PC-9 (cell line): ENCODE measurements at regions of chr1 and their contacts with region 1.

Region 1: GRCh38 chr1:1164701-1165451 is 8.8 kb upstream of the TTLL10 start:
- DNase-seq: peak; percentile 76 to 78
- H3K4me3 ChIP-seq: peak overlapping the region; percentile 99
- H3K27ac ChIP-seq: peak overlapping the region; percentile 84
- H3K4me1 ChIP-seq: peaks cover 18% of the 10 kb centered on the region
- H3K27me3 ChIP-seq: no peaks in the 10 kb centered on the region
- CTCF ChIP-seq: no peak

Region 2: DNA sequence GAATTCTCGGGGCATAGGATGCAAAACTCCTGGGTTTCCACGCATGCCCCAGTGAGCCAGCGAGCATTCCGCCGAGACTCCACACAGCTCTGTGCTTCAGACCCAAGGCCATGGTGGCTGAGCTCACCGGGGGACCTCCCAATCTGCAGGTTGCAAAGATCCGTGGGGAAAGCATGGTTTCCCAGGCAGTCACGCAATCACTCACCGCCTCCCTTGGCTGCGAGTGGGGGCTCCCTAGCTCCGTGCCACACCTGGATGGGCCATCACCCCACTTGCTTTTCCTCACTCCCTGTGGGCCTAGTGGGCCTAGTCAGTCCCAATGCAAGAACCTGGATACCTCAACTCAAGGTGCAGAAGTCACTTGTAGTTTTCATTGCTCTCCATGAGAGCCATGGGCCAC is 278.1 kb before region 1 on chr1:
- CTCF ChIA-PET with region 1: no interaction called
- POLR2A ChIA-PET with region 1: interaction called, 12 read pairs
- intact Hi-C with region 1: no loop called
- DNase-seq: no peak
- H3K4me3 ChIP-seq: no peak overlapping the region
- H3K27ac ChIP-seq: no peak overlapping the region
- H3K4me1 ChIP-seq: no peaks in the 10 kb centered on the region
- H3K27me3 ChIP-seq: peaks cover 49% of the 10 kb centered on the region
- CTCF ChIP-seq: no peak

Region 3: DNA sequence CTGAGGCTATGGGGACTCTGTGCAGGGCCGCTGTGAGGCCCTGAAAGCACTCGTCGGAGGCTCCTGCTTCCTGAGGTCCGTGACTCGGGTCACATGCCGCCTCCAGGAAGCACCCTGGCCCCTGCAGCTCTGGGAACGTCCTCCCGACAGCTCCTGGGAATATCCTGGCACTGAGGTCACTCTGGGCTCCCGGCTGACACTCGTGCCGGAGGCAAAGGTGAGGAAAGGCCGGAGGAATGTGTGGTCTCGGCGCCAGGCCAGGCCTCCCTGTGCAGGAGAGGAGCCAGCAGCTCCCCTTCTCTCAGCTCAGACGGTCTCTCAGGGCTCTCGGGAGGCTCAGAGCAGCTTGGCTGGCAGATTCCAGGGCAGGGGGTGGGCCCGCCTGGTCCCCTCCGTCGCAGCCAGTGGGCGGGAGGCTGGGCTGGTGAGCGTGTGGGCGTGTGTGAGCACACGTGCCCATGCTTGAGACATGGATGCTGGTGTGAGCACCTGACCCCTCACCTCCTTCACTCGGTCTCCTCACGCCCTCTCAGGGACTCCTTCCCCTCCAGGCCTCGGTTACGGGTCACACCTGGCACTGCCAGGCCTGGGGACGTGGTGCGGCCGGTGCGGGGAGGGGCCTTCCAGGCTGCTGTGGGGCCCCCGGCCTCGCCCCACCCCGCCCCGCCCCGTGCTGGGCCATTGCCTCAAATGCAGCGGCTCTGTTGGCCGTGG is 85.3 kb before region 1 on chr1:
- CTCF ChIA-PET with region 1: no interaction called
- POLR2A ChIA-PET with region 1: no interaction called
- intact Hi-C with region 1: no loop called
- DNase-seq: peak; percentile 96
- H3K4me3 ChIP-seq: peak overlapping the region; percentile 55
- H3K27ac ChIP-seq: peak overlapping the region; percentile 93
- H3K4me1 ChIP-seq: peaks cover 20% of the 10 kb centered on the region
- H3K27me3 ChIP-seq: no peaks in the 10 kb centered on the region
- CTCF ChIP-seq: no peak

Region 4: DNA sequence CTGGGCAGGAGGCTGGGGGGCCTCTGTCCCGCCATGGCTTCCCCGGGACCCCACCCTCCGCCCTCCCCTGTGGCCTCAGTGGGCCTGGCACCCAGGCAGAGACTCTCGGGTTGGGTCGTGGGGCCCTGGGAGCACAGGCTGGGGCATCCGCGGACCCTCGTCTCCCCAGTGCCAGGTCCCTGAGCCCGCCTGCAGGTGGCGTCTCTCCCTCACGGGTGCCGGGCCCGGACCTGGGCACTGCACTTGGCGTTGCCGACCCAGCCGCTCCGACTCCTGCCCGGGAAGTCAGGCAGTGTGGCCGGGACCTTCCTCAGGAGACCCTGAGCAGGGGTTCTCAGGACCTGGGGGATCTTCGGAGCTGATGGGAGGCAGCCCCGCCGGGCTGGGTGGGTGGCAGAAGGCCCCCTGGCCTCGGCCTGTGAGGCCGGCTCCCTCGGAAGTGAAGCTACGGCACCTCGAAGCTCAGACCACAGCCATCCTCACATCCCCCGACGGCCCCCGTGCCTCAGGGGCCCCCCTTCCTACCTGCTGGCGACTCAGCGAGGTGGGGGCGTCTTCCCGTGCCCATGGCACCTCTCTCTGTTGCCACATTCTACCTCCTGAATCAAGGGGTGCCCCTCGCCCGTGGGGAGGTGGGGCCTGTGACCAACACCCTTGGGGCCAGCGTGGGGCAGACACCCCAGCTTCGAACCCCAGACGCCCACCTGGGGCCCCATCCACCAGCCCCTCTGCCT is 42.6 kb before region 1 on chr1:
- CTCF ChIA-PET with region 1: no interaction called
- POLR2A ChIA-PET with region 1: interaction called, 4 read pairs
- intact Hi-C with region 1: loop called (anchors 2 kb)
- DNase-seq: peak in 1 of 2 experiments; percentile 82
- H3K4me3 ChIP-seq: peak overlapping the region; percentile 29; the same call in 1 of the 2 replicates
- H3K27ac ChIP-seq: no peak overlapping the region
- H3K4me1 ChIP-seq: peaks cover 22% of the 10 kb centered on the region
- H3K27me3 ChIP-seq: no peaks in the 10 kb centered on the region
- CTCF ChIP-seq: peak; percentile 86

Region 5: DNA sequence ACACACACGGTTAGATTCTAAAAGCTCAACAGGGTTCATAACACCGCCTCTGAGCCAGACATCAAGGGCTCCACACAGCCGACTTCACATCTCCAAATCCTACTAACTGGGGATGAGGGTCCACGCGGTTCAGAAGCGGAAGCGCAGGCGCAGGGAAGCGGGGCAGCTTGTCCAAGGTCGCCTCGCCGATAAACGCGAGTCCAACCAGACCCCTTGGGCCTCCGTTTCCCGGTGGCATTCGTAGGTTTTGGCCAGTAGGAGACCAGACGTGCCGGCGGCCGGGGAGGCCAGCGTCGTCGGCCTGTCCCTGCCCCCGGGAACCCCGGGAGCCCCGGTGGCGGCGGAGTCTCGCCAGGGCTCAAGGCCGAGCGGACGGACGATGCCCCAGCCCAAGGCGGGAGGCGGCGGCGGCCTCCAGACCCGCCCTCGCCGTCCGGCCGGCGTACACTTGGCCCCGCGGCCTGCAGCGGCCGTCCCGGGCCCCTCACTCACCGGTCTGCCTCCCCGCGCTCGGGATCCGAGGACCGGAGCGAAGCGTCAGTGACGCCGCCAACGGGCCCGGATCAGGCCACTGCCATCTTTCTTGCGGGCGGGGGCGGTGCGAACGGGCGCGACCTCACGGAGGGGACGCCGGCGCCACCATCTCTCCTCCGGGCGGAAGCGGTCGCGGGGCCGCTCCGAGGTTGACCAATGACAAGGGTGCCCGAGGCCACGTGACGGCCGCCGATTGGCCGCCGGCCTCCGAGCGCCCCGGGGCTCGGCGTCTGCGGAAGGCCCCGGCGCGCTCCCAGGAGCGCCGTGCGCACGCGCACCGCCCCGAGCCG is 66.7 kb after region 1 on chr1 and contains the start of gene SDF4:
- CTCF ChIA-PET with region 1: interaction called, 3 read pairs
- POLR2A ChIA-PET with region 1: no interaction called
- intact Hi-C with region 1: loop called (anchors 1 kb)
- DNase-seq: peak; percentile 86 to 94
- H3K4me3 ChIP-seq: peak within 1 kb of the TSS; percentile 99
- H3K27ac ChIP-seq: peak within 1 kb of the TSS; percentile 32
- H3K4me1 ChIP-seq: peaks cover 36% of the 10 kb centered on the region
- H3K27me3 ChIP-seq: no peaks in the 10 kb centered on the region
- CTCF ChIP-seq: no peak
- total RNA-seq, gene SDF4: 133 and 139 TPM in 2 replicates

Region 6: DNA sequence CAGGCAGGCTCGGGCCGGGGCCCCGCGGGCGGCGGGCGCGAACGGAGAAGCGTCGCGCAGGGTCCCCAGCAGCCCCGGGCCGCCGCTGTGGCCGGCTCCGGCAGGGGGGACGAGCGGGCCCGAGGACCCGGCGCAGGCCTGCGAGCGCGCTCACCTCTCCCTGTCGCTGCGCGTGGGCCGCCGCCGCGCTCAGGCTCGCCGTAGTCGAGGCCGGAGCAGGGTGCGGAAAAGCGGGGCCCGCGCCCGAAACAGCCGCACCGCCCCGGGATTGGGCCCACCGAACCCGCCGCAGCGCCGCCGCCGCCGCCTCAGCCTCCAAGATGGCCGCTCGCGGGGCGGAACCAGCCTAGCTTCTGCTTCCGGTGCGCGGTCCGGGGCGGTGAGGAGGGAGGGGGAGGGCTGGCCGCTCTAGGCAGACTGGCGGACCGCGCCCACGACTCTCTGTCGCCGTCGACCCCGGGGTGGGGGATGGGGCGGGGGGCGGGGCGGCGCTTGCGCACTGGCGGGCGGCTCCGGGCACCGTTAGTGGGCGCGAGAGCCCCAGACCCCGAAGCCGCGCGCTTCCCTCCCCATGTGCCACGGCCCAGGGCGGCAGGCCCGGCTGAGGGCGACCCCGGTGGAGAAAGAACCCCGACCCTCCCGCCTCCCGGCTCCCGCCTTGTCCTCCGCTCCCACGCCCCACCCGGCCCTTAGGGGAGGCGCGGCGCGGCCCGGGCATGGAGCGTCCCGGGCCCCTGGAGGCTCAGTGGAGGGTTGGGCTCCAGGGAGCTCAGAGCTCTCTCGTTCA is 108.8 kb after region 1 on chr1 and contains the start of gene UBE2J2:
- CTCF ChIA-PET with region 1: no interaction called
- POLR2A ChIA-PET with region 1: interaction called, 14 read pairs
- intact Hi-C with region 1: no loop called
- DNase-seq: peak; percentile 73 to 85
- H3K4me3 ChIP-seq: peak within 1 kb of the TSS; percentile 70
- H3K27ac ChIP-seq: peak within 1 kb of the TSS; percentile 42
- H3K4me1 ChIP-seq: peaks cover 17% of the 10 kb centered on the region
- H3K27me3 ChIP-seq: no peaks in the 10 kb centered on the region
- CTCF ChIP-seq: no peak
- total RNA-seq, gene UBE2J2: 54.2 and 55.0 TPM in 2 replicates